ENCODE measurements at regions of chr17 and their contacts with region 1.

Region 1: DNA sequence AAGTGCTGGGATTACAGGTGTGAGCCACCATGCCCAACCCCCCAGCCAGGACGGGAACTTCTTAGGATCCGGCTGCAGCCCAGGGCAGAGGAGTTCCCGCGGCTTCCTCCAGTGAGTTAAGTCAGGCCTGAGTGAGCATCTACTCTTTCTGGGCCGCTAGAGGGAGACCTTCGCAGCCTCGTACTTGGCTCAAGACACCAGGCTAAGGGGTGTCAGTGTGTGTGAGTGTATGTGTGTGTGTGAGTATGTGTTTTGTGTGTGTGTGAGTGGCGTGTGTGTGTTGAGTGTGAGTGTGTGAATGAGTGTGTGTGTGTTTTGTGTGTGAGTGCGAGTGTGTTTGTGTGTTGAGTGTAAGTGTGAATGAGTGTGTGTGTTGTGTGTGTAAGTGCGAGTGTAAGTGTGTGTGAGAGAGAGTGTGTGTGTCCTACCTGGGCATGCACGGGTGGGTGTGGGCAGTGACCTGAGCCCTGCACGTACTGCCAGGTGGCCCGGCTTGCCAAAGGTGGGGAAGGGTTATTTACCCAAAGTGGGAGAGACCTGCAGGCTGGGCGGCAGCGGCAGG is 58.5 kb downstream of the TMEM235 start:
- DNase-seq: peak; percentile 74 to 90 (median 85)
- H3K4me3 ChIP-seq: no peak overlapping the region
- H3K27ac ChIP-seq: no peak overlapping the region
- H3K4me1 ChIP-seq: no peaks in the 10 kb centered on the region
- H3K27me3 ChIP-seq: no peaks in the 10 kb centered on the region
- CTCF ChIP-seq: peak; percentile 56 to 95 (median 82)
- POLR2A ChIP-seq: no peak

Region 2: DNA sequence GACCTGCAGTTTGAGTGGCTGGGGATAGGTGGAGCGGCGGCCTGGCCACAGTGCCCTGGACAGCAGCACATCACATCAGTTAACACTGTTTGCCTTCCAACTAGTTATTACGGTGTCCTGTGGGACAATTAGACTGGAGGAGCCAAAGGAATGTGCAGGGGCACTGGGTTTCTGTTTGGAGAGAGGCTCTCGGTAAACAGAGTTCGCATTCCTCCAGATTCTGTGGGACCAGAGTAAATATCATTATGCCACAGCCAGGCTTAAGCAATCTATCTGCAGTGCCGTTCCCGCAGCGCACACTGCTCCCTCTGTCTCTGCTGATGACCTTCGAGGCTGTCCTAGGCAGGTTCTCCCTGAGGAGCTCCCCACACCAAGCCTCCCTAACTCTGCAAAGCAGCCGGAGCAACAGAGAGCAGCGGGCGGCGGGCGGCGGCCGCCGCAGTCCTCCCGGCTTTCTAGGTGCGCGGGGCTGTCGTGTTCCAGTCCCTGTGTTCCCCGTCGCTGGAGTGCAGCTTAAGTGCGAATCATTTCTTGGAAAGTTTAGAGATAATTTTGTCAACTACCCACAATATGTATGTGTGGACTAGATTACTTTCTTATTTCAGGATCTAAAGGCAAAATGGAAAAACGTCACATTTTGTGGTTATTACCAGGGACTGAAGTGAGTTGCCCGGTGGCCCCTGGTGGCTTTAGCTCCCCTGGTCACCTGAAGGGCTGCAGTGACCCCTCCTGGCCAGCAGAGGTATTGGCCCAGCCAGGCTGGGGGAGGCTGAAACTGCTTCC is 131.8 kb after region 1 on chr17:
- intact Hi-C with region 1: loop called (anchors 5 kb)
- DNase-seq: peak; percentile 74 to 85 (median 80)
- H3K4me3 ChIP-seq: no peak overlapping the region
- H3K27ac ChIP-seq: peak overlapping the region in 1 of 5 donors; percentile 40
- H3K4me1 ChIP-seq: peaks cover 0 to 8% of the 10 kb centered on the region in 2 donors
- H3K27me3 ChIP-seq: no peaks in the 10 kb centered on the region
- CTCF ChIP-seq: peak; percentile 97 to 99 (median 98)
- POLR2A ChIP-seq: no peak